ENCODE measurements at regions of chr12 and their contacts with region 1.

Region 1: DNA sequence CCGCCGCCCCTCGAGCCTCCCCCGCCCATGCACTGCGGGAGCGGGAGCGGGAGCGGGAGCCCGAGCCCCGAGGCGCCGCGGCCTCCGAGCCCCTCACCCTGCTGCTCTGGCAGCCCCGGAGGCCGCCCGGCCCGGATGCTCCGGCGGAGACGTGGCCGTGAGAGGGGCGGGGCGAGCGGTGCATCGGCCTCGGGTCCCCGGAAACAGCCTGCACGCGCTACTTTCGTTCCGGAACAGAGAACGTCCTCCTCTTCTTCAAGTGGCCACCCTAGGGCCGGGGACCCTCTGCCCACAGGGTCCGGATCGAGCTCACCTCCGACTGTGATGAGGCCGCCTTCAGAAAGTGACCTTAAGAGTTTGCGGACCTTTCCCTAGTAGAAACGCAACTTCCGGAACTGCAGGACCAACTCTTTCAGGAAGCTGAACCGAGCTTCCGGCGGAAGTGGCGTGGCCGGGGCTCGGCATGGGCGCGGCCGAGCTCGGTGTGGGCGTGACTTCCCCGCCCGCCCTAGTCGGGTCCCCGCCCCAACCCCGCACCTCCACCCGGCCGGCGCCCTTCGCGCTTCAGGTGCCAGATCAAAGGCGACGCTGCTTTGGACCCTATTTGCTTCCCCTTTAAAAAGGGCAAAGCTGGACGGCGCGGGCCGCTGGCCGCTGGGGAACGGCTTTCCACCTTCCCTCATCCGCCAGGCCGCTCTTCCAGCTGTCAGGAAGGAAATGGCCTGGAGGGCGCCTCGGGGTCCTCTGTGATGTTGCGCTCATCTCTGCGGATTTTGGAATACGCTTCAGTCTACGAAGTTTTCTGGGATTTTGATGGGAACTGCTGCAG is at the start of gene GOLGA3:
- DNase-seq: peak; percentile 87 to 98 (median 96)
- ATAC-seq: peak; percentile 91
- H3K4me3 ChIP-seq: peak within 1 kb of the TSS; percentile 92
- H3K4me3 Mint-ChIP-seq: peak within 1 kb of the TSS; percentile 96
- H3K27ac ChIP-seq: peak within 1 kb of the TSS; percentile 100
- H3K27ac Mint-ChIP-seq: peak within 1 kb of the TSS; percentile 100
- H3K4me1 ChIP-seq: peaks cover 29% of the 10 kb centered on the region
- H3K4me1 Mint-ChIP-seq: peaks cover 56% of the 10 kb centered on the region
- H3K27me3 ChIP-seq: no peaks in the 10 kb centered on the region
- H3K27me3 Mint-ChIP-seq: no peaks in the 10 kb centered on the region
- CTCF ChIP-seq: no peak
- total RNA-seq, gene GOLGA3: 31.7 to 33.8 TPM

Region 2: DNA sequence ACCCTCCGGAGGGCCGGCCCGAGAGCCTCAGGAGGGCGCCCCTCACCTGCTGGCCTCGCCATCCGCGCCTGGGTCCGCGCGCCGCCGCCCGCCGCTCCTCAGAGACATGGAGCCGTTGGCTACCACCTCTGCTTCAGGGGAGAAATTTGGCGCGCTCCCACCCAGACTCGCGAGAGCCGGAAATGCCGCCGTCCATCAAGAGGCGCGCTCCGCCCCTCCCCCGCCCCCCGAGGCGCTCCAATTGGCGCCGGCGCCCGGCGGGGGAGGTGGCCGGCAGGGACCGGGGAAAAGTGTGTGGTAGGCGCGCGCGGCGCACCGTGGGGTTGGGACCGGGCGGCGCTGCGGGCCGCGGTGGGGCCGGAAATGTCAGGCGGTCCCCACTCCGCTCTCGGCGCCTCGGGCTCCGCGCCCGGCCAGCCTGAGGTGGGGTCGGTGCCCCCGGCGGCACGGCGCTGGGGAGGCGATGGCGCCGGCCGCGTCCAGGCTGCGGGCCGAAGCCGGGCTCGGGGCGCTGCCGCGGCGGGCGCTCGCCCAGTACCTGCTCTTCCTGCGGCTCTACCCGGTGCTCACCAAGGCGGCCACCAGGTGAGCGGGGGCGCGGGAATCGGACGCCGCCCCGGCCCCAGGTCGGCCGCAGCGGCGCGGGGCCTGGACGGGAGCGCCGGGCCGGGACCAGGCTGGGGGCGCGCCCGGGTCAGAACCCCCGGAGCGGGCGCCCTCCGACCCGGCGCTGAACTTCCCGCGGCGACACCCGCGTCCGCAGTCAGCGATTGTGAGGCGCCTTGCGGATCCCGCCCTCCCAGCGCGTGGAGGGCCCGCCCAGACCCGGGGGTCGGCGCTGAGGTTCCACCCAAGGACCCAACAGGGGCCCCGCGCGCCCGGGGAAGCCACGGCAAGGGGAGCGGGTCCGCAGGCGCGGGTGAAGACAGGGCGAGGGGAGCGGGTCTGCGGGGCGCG is 141.4 kb before region 1 on chr12 and contains the starts of genes POLE and PXMP2:
- CTCF ChIA-PET with region 1: no interaction called
- POLR2A ChIA-PET with region 1: no interaction called
- intact Hi-C with region 1: loop called (anchors 2 to 5 kb)
- DNase-seq: peak; percentile 88 to 98 (median 94)
- ATAC-seq: peak; percentile 95
- H3K4me3 ChIP-seq: peak within 1 kb of the TSS; percentile 38 to 58
- H3K4me3 Mint-ChIP-seq: peak within 1 kb of the TSS; percentile 82
- H3K27ac ChIP-seq: peak within 1 kb of the TSS in 1 of 2 experiments; percentile 27
- H3K27ac Mint-ChIP-seq: peak within 1 kb of the TSS; percentile 55
- H3K4me1 ChIP-seq: peaks cover 7% of the 10 kb centered on the region
- H3K4me1 Mint-ChIP-seq: peaks cover 14% of the 10 kb centered on the region
- H3K27me3 ChIP-seq: no peaks in the 10 kb centered on the region
- H3K27me3 Mint-ChIP-seq: no peaks in the 10 kb centered on the region
- CTCF ChIP-seq: no peak
- total RNA-seq, gene POLE: 25.9 to 31.1 TPM
- total RNA-seq, gene PXMP2: 1.2 to 1.8 TPM

Region 3: GRCh38 chr12:132710422-132711168 is 118.3 kb before region 1 on chr12 and contains the start of gene PGAM5:
- CTCF ChIA-PET with region 1: no interaction called
- POLR2A ChIA-PET with region 1: no interaction called
- intact Hi-C with region 1: loop called (anchors 1 kb)
- DNase-seq: peak; percentile 81 to 98 (median 90)
- ATAC-seq: peak; percentile 97
- H3K4me3 ChIP-seq: peak within 1 kb of the TSS; percentile 68 to 69
- H3K4me3 Mint-ChIP-seq: peak within 1 kb of the TSS; percentile 87
- H3K27ac ChIP-seq: peak within 1 kb of the TSS; percentile 75 to 86
- H3K27ac Mint-ChIP-seq: peak within 1 kb of the TSS; percentile 94
- H3K4me1 ChIP-seq: peaks cover 21% of the 10 kb centered on the region
- H3K4me1 Mint-ChIP-seq: peaks cover 21% of the 10 kb centered on the region
- H3K27me3 ChIP-seq: no peaks in the 10 kb centered on the region
- H3K27me3 Mint-ChIP-seq: no peaks in the 10 kb centered on the region
- CTCF ChIP-seq: no peak
- total RNA-seq, gene PGAM5: 14.7 to 15.7 TPM

Region 4: DNA sequence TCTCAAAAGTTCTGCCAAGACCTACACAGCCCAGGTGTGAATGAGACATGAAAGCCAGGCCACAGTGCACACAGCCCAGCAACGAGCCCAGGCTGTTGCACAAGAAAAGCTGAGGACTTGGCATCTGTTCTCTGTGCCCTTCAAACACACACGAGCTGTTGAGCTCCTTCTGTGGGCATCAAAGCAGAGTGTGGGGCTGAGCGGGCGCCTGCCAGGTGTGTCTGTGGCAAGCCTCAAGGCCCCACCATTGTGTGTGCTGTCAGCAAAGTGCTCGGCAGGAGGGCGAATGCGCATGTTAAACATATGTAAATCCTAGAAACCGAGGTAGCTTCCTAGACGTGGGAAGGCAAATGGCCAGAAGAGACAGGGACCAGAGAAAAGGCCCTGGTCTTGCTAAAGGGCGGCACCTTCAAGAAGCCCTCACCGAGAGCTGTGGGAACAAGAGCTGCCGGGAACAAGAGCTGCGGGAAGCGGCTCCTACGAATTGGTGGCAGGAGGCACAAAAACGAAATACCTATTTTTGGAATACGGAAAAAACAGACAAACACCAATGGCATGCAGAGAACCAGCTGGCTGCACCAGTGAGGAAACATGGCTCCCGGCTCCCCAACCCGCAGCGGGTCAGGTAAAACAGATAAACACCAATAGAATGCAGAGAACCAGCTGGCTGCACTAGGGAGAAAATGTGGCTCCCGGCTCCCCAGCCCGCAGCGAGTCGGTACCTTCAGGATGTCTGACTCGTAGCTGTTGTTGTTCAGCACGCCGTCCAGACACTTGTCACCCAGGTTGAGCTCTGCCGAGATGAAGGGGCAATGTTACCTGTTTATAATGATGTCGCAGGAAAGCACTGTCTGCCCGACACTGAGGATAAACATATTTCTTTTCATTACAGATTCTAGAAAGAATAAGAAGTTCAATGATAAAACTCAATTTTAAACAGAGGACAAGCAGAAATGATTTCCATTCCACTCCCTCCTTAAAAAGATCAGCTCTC is 18.7 kb after region 1 on chr12:
- CTCF ChIA-PET with region 1: interaction called, 6 read pairs
- POLR2A ChIA-PET with region 1: interaction called, 18 read pairs
- intact Hi-C with region 1: loop called in 1 of 2 experiments (anchors 2 kb)
- DNase-seq: peak; percentile 13 to 76 (median 52)
- ATAC-seq: peak; percentile 90
- H3K4me3 ChIP-seq: no peak overlapping the region
- H3K4me3 Mint-ChIP-seq: peak overlapping the region; percentile 67
- H3K27ac ChIP-seq: peak overlapping the region in 1 of 2 experiments; percentile 13
- H3K27ac Mint-ChIP-seq: peak overlapping the region; percentile 95
- H3K4me1 ChIP-seq: peaks cover 24% of the 10 kb centered on the region
- H3K4me1 Mint-ChIP-seq: peaks cover 28% of the 10 kb centered on the region
- H3K27me3 ChIP-seq: no peaks in the 10 kb centered on the region
- H3K27me3 Mint-ChIP-seq: no peaks in the 10 kb centered on the region
- CTCF ChIP-seq: no peak

Region 5: DNA sequence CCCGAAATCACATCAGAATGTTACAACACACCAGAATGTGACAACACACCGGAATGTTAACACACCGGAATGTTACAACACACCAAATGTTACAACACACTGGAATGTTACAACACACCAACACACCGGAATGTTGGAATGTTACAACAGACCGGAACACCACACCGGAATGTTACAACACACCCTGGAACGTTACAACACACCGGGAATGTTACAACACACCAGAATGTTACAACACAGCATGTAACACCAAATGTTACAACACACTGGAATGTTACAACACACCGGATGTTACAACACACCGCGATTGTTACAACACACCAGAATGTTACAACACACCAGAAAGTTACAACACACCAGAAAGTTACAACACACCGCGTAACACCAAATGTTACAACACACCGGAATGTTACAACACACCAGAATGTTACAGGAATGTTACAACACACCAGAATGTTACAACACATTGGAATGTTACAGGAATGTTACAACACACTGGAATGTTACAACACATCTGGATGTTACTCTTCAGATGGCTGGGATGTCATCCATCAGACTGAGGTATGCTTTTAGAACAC is 37.4 kb after region 1 on chr12:
- CTCF ChIA-PET with region 1: no interaction called
- POLR2A ChIA-PET with region 1: interaction called, 4 read pairs
- intact Hi-C with region 1: loop called in 1 of 2 experiments (anchors 5 kb)
- DNase-seq: no peak
- ATAC-seq: no peak
- H3K4me3 ChIP-seq: no peak overlapping the region
- H3K4me3 Mint-ChIP-seq: no peak overlapping the region
- H3K27ac ChIP-seq: peak overlapping the region in 1 of 2 experiments; percentile 8
- H3K27ac Mint-ChIP-seq: peak overlapping the region; percentile 86
- H3K4me1 ChIP-seq: peaks cover 24% of the 10 kb centered on the region
- H3K4me1 Mint-ChIP-seq: peaks cover 26% of the 10 kb centered on the region
- H3K27me3 ChIP-seq: no peaks in the 10 kb centered on the region
- H3K27me3 Mint-ChIP-seq: no peaks in the 10 kb centered on the region
- CTCF ChIP-seq: no peak

Region 6: DNA sequence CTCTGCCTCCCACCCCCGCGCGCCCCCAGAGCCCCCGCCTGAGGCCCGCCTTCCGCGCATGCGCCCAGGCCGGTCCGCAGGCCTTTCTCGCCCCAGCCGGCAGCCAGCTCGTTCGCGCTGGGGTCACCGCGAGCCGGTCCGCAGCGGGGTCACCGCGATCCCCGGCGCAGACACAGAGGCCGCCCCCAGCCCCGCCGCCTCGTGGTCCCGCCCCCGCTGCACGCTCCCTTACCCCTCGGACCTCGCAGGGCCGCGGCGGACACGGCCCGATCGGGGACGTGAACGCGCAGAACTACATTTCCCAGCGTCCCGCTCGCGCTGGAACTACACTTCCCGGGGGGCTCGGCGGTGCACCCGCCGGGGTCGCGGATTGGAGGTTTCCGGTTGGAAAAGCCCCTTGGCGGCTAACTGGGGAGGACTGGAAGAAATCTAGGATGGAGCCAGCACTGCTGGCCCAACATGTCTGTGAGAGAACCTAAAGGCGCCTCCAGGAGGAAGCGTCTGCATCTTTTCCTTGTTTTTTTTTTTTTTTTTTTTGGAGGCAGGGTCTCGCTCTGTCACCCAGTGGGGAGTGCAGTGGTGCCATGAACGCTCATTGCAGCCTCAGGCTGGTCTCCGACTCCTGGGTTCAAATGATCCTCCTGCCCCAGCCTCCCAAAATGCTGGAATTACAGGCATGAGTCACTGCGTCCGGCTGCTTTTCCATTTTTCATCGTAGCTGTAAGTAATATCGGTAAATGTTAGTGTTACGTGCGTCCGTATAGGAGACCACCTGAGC is 127.3 kb after region 1 on chr12 and contains the start of gene ZNF605:
- CTCF ChIA-PET with region 1: no interaction called
- POLR2A ChIA-PET with region 1: no interaction called
- intact Hi-C with region 1: loop called (anchors 2 to 5 kb)
- DNase-seq: peak; percentile 70 to 95 (median 86)
- ATAC-seq: peak; percentile 93
- H3K4me3 ChIP-seq: peak within 1 kb of the TSS; percentile 94 to 100
- H3K4me3 Mint-ChIP-seq: peak within 1 kb of the TSS; percentile 96
- H3K27ac ChIP-seq: peak within 1 kb of the TSS; percentile 78 to 86
- H3K27ac Mint-ChIP-seq: peak within 1 kb of the TSS; percentile 91
- H3K4me1 ChIP-seq: peaks cover 22% of the 10 kb centered on the region
- H3K4me1 Mint-ChIP-seq: peaks cover 32% of the 10 kb centered on the region
- H3K27me3 ChIP-seq: no peaks in the 10 kb centered on the region
- H3K27me3 Mint-ChIP-seq: no peaks in the 10 kb centered on the region
- CTCF ChIP-seq: no peak
- total RNA-seq, gene ZNF605: 5.0 TPM

Region 7: DNA sequence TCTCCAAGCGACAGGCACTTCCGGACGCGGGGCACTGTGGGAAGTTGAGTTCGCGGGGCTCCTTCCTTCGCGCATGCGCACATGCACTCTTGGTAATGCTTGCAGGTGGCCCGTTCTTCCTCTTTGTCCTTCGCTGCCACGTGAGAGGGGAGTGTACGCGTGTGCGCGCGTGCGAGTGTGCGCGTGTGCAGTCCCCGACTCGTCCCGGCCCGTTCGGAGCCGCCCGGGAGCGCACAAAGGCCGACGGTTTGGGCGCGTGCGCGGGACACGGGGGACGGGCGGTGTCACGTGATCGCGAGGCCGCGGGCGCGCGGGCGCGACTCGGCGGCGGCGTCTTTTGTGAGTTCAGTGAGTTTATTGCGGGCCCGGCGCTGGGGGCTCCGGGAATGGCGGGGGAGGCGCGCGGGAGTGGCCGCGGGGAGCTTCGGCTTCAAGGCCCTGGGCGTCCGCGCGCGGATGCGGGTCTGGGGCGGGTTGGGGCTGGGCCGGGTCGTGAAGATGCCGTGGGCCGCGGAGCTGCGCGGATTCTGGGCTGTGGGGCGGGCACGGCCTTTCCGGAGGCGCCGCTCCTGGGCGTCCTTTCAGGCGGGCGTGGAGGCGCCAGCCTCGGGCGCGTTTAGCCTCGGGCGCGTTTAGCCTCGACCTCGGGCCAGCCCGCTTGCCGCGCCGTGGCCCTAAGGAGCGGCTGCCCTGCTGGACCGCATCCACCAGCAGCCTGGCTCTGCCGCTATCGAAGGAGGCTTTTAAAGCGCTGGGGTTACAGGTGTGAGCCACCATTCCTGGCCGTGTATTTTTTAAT is 208.5 kb after region 1 on chr12 and contains the start of gene ZNF84:
- CTCF ChIA-PET with region 1: no interaction called
- POLR2A ChIA-PET with region 1: no interaction called
- intact Hi-C with region 1: loop called in 1 of 2 experiments (anchors 1 kb)
- DNase-seq: peak; percentile 94 to 99 (median 96)
- ATAC-seq: peak; percentile 97
- H3K4me3 ChIP-seq: peak within 1 kb of the TSS; percentile 62 to 69
- H3K4me3 Mint-ChIP-seq: peak within 1 kb of the TSS; percentile 93
- H3K27ac ChIP-seq: peak within 1 kb of the TSS; percentile 78 to 89
- H3K27ac Mint-ChIP-seq: peak within 1 kb of the TSS; percentile 92
- H3K4me1 ChIP-seq: peaks cover 4% of the 10 kb centered on the region
- H3K4me1 Mint-ChIP-seq: peaks cover 20% of the 10 kb centered on the region
- H3K27me3 ChIP-seq: no peaks in the 10 kb centered on the region
- H3K27me3 Mint-ChIP-seq: no peaks in the 10 kb centered on the region
- CTCF ChIP-seq: no peak
- total RNA-seq, gene ZNF84: 26.8 to 27.2 TPM